CD4-positive, alpha-beta T cell (primary cell): ENCODE measurements at regions of chr1 and their contacts with region 1.

Region 1: DNA sequence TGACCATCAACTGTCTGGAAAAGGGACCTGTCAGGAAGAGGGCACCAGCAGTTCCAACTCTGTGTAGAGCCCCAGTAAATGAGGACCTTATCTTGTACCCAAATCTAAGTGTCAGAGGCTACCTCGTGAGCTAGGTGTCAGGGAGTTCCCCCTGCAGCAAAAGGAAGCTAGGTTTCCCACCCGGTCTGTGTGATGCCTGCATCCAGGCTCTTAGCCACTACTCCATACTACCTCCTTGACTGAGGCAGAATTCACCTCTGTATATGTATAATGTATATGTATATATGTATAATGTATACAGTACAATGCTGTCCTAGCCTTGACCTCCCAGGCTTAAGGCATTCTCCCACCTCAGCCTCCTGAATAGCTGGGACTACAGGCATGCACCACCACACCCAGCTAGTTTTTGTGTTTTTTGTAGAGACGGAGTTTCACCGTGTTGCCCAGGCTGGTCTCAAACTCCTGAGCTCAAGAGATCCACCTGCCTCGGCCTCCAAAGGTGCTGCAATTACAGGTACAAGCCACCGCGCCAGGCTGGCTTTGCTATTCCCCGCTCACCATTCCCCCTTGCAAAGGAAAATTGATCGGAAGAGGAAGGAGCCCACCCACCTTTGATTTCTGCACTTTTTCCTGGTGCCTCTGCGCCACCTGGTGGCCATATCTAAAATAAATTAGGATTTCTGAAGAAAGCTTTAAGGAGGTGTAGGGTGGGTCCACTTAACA is 15.7 kb upstream of the LUZP1 start:
- DNase-seq: peak in 12 of 14 experiments; percentile 8 to 81 (median 34)
- ATAC-seq: peak; percentile 48
- H3K4me3 ChIP-seq: peak overlapping the region; percentile 26
- H3K4me3 Mint-ChIP-seq: peak overlapping the region; percentile 38
- H3K27ac ChIP-seq: no peak overlapping the region
- H3K27ac Mint-ChIP-seq: no peak overlapping the region
- H3K4me1 ChIP-seq: peaks cover 11% of the 10 kb centered on the region
- H3K4me1 Mint-ChIP-seq: peaks cover 10% of the 10 kb centered on the region
- H3K27me3 ChIP-seq: no peaks in the 10 kb centered on the region
- H3K27me3 Mint-ChIP-seq: peaks cover 5% of the 10 kb centered on the region
- CTCF ChIP-seq: peak; percentile 97

Region 2: DNA sequence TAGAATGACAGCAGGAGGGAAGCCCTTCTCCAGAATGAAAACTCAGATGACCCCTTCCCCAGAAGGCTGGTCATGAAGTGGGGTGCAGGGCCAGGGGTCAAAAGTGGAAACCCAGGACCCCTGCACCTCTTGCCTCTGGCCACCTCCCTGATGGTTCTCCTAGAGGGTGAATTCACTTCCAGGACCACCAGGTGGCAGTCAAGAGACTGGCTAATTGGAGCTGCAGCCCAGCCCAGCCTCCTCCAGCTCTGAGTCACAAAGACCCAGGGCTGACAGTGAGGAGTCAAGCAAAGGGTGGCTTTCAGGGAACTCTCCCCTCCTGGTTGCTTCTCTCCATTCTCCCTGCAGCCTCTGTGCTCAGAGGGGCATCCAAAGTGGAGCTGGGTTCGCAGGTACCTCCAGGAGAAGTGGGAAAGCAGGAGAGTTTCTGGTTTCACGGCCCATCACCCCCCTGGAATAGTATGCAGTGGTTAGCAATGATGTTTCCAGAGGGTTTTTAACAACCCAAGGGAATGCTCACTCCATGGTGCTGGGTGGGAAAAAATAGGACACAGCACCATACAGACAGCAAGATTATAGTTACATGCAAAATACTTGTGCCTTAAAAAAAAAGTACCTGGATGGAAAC is 479.8 kb before region 1 on chr1:
- CTCF ChIA-PET with region 1: no interaction called
- POLR2A ChIA-PET with region 1: no interaction called
- intact Hi-C with region 1: loop called in 1 of 2 experiments (anchors 10 kb)
- DNase-seq: peak; percentile 41 to 80 (median 64)
- ATAC-seq: peak; percentile 79
- H3K4me3 ChIP-seq: no peak overlapping the region
- H3K4me3 Mint-ChIP-seq: no peak overlapping the region
- H3K27ac ChIP-seq: no peak overlapping the region
- H3K27ac Mint-ChIP-seq: no peak overlapping the region
- H3K4me1 ChIP-seq: no peaks in the 10 kb centered on the region
- H3K4me1 Mint-ChIP-seq: no peaks in the 10 kb centered on the region
- H3K27me3 ChIP-seq: peaks cover 9 to 11% of the 10 kb centered on the region in 2 experiments
- H3K27me3 Mint-ChIP-seq: peaks cover 47% of the 10 kb centered on the region
- CTCF ChIP-seq: peak; percentile 84

Region 3: GRCh38 chr1:23098463-23099170 is 85.8 kb before region 1 on chr1:
- CTCF ChIA-PET with region 1: interaction called, 160 read pairs
- POLR2A ChIA-PET with region 1: interaction called, 38 read pairs
- intact Hi-C with region 1: loop called (anchors 1 kb)
- DNase-seq: peak; percentile 44 to 85 (median 53)
- ATAC-seq: peak; percentile 66
- H3K4me3 ChIP-seq: no peak overlapping the region
- H3K4me3 Mint-ChIP-seq: peak overlapping the region; percentile 2
- H3K27ac ChIP-seq: no peak overlapping the region
- H3K27ac Mint-ChIP-seq: no peak overlapping the region
- H3K4me1 ChIP-seq: peaks cover 30% of the 10 kb centered on the region
- H3K4me1 Mint-ChIP-seq: peaks cover 48% of the 10 kb centered on the region
- H3K27me3 ChIP-seq: no peaks in the 10 kb centered on the region
- H3K27me3 Mint-ChIP-seq: no peaks in the 10 kb centered on the region
- CTCF ChIP-seq: peak; percentile 81

Region 4: GRCh38 chr1:23122023-23122748 is 62.2 kb before region 1 on chr1:
- CTCF ChIA-PET with region 1: interaction called, 20 read pairs
- POLR2A ChIA-PET with region 1: interaction called, 12 read pairs
- intact Hi-C with region 1: no loop called
- DNase-seq: no peak
- ATAC-seq: no peak
- H3K4me3 ChIP-seq: no peak overlapping the region
- H3K4me3 Mint-ChIP-seq: no peak overlapping the region
- H3K27ac ChIP-seq: no peak overlapping the region
- H3K27ac Mint-ChIP-seq: no peak overlapping the region
- H3K4me1 ChIP-seq: peaks cover 40% of the 10 kb centered on the region
- H3K4me1 Mint-ChIP-seq: peaks cover 75% of the 10 kb centered on the region
- H3K27me3 ChIP-seq: no peaks in the 10 kb centered on the region
- H3K27me3 Mint-ChIP-seq: no peaks in the 10 kb centered on the region
- CTCF ChIP-seq: no peak

Region 5: DNA sequence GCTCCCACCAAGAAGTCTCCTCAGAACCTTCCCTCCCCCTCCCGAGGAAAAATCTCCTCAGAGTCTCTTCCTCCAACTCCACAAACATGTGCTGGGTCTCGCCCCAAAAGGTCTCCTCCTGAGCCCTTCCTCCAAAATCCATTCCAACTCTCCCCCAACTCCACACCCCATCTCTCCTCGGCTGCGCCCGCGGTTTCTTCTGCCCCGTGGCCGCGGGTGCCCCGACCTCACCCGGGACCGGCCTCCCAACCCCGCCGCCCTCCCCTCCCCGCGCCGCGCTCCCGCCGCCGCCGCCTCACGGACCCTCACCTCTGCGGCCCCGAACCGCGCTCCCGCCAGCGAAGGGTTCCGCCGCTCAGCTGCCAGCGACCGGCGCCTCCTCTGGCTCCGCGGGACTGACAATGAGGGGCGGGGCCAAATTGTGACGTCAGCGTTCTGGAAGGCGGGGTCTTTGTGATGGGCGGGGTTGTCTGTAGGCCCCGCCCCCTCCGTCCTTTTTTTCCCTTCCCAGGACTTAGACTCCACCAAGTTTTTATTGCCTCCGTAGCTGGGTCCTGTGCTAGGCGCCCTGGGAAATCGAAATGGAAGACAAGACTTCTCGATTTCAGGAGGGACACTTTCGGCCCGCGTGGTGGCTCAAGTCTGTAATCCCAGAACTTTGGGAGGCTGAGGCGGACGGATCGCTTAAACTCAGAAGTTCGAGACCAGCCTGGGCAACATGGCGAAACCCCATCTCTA is 15.7 kb before region 1 on chr1 and contains the start of gene LUZP1:
- CTCF ChIA-PET with region 1: interaction called, 23 read pairs
- POLR2A ChIA-PET with region 1: interaction called, 4 read pairs
- intact Hi-C with region 1: no loop called
- DNase-seq: peak; percentile 80 to 95 (median 83)
- ATAC-seq: peak; percentile 90
- H3K4me3 ChIP-seq: peak within 1 kb of the TSS; percentile 87
- H3K4me3 Mint-ChIP-seq: peak within 1 kb of the TSS; percentile 97
- H3K27ac ChIP-seq: peak within 1 kb of the TSS; percentile 68 to 74
- H3K27ac Mint-ChIP-seq: peak within 1 kb of the TSS; percentile 79
- H3K4me1 ChIP-seq: peaks cover 25% of the 10 kb centered on the region
- H3K4me1 Mint-ChIP-seq: peaks cover 46% of the 10 kb centered on the region
- H3K27me3 ChIP-seq: no peaks in the 10 kb centered on the region
- H3K27me3 Mint-ChIP-seq: no peaks in the 10 kb centered on the region
- CTCF ChIP-seq: no peak
- total RNA-seq, gene LUZP1: 20.1 to 23.7 TPM